HCT116 (cell line): ENCODE measurements at regions of chr1 and their contacts with region 1.

Region 1: DNA sequence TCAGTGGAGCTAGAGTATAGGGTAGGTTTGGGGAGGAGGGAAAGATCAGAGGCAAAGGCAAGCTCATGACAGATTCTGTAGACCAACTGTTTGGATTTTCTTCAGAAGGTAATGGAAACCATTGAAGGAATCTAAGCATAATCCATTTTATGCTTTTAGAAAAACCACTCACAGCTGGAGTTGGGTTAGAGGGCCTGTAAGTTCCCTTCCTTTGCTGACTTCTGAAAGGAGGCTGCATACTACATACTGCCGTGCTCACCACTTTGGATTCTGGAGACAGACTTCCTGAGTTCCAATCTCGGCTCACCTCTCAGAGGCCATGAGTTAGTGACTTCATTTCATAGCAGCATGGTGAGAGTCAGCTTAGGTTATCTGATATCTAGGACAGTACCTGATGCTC is 6.4 kb upstream of the SYT2 start:
- DNase-seq: no peak
- ATAC-seq: no peak
- H3K4me3 ChIP-seq: no peak overlapping the region
- H3K27ac ChIP-seq: no peak overlapping the region
- H3K4me1 ChIP-seq: no peaks in the 10 kb centered on the region
- H3K27me3 ChIP-seq: peaks cover 9% of the 10 kb centered on the region; the same call in 1 of the 2 replicates
- CTCF ChIP-seq: no peak
- POLR2A ChIP-seq: no peak
- RAD21 ChIP-seq: no peak

Region 2: GRCh38 chr1:202184750-202185460 is 531.7 kb before region 1 on chr1:
- CTCF ChIA-PET with region 1: interaction called, 11 read pairs
- POLR2A ChIA-PET with region 1: no interaction called
- RAD21 ChIA-PET with region 1: interaction called in 1 of 2 experiments, 3 read pairs
- intact Hi-C with region 1: loop called (anchors 2 kb)
- DNase-seq: peak; percentile 88
- ATAC-seq: peak; percentile 90
- H3K4me3 ChIP-seq: no peak overlapping the region
- H3K27ac ChIP-seq: no peak overlapping the region
- H3K4me1 ChIP-seq: peaks cover 0 to 11% of the 10 kb centered on the region in 2 experiments; a peak in 3 of 4 replicates
- H3K27me3 ChIP-seq: no peaks in the 10 kb centered on the region
- CTCF ChIP-seq: peak; percentile 88 to 96 (median 90)
- POLR2A ChIP-seq: no peak
- RAD21 ChIP-seq: peak; percentile 79

Region 3: GRCh38 chr1:202462342-202463076 is 254.1 kb before region 1 on chr1:
- CTCF ChIA-PET with region 1: interaction called, 13 read pairs
- POLR2A ChIA-PET with region 1: no interaction called
- RAD21 ChIA-PET with region 1: interaction called in 1 of 2 experiments, 4 read pairs
- intact Hi-C with region 1: loop called (anchors 1 kb)
- DNase-seq: no peak
- ATAC-seq: no peak
- H3K4me3 ChIP-seq: no peak overlapping the region
- H3K27ac ChIP-seq: no peak overlapping the region
- H3K4me1 ChIP-seq: peaks cover 0 to 28% of the 10 kb centered on the region in 2 experiments; a peak in 2 of 4 replicates
- H3K27me3 ChIP-seq: no peaks in the 10 kb centered on the region
- CTCF ChIP-seq: no peak
- POLR2A ChIP-seq: no peak
- RAD21 ChIP-seq: no peak

Region 4: DNA sequence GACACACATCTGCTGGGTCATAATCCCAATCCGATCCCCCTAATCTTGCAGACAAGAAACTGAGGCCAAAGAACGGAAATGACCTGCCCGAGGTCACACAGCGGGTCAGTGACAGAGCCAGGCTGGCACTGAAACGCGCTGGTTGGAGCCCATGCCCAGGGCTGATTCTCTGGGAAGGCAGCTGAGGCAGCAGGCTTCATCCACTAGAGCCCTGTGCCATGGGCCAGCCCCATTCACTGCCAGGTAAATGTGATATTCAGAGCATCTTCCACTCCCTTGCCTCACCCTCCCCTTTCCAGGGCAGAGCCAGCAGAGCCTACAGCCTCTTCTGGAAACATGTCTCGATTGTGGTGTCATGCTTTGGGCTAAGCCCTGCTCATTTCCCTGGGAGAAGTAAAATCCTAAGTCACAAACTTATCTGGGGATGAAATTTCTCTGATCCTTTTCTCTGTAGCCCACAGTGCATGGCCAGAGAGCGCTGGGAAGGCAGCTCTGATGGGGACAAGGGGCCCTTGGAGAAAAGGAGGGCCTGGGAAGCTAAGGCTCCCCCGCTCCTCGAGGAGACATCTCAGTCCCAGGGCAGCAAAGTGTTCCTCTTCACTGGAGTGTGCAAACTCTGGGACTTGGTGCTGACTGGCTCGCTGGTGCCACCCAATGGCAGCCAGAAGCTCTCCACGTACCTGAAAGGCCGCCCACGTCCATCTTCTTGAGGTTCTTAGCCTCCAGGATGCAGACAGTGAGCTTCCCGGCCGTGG is 116.8 kb before region 1 on chr1:
- CTCF ChIA-PET with region 1: interaction called, 5 read pairs
- POLR2A ChIA-PET with region 1: no interaction called
- RAD21 ChIA-PET with region 1: interaction called in 1 of 2 experiments, 4 read pairs
- intact Hi-C with region 1: loop called (anchors 1 kb)
- DNase-seq: peak; percentile 34
- ATAC-seq: peak; percentile 99
- H3K4me3 ChIP-seq: no peak overlapping the region
- H3K27ac ChIP-seq: no peak overlapping the region
- H3K4me1 ChIP-seq: peaks cover 0 to 8% of the 10 kb centered on the region in 2 experiments; a peak in 1 of 4 replicates
- H3K27me3 ChIP-seq: no peaks in the 10 kb centered on the region
- CTCF ChIP-seq: peak; percentile 76 to 87 (median 81)
- POLR2A ChIP-seq: no peak
- RAD21 ChIP-seq: peak; percentile 94

Region 5: GRCh38 chr1:202750758-202751157 is 34.1 kb after region 1 on chr1:
- CTCF ChIA-PET with region 1: no interaction called
- POLR2A ChIA-PET with region 1: no interaction called
- RAD21 ChIA-PET with region 1: no interaction called
- intact Hi-C with region 1: no loop called
- DNase-seq: no peak
- ATAC-seq: no peak
- H3K4me3 ChIP-seq: no peak overlapping the region
- H3K27ac ChIP-seq: no peak overlapping the region
- H3K4me1 ChIP-seq: no peaks in the 10 kb centered on the region
- H3K27me3 ChIP-seq: no peaks in the 10 kb centered on the region
- CTCF ChIP-seq: peak in 2 of 3 experiments; percentile 20 to 23; a peak in 2 of 6 replicates
- POLR2A ChIP-seq: no peak
- RAD21 ChIP-seq: peak; percentile 52

Region 6: DNA sequence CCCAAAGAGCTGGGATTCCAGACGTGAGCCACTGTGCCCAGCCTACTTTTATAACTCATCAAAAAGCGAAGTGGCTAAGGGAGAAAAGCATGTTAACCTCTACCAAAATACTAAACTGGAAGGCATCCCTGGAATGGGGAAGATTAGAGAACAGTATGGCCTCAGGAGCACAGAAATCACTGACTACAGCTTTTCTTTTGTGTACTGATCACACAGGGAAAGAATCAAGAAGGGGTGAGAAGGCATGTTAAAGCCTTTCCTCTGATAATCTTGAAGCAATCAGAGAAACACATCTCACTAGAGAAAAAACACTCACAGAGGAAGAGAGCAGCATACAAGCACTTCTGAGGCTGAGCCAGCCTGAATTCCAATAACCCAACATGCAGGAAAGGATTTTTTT is 104.8 kb after region 1 on chr1:
- CTCF ChIA-PET with region 1: no interaction called
- POLR2A ChIA-PET with region 1: no interaction called
- RAD21 ChIA-PET with region 1: no interaction called
- intact Hi-C with region 1: no loop called
- DNase-seq: no peak
- ATAC-seq: no peak
- H3K4me3 ChIP-seq: no peak overlapping the region
- H3K27ac ChIP-seq: no peak overlapping the region
- H3K4me1 ChIP-seq: peaks cover 0 to 7% of the 10 kb centered on the region in 2 experiments; a peak in 1 of 4 replicates
- H3K27me3 ChIP-seq: no peaks in the 10 kb centered on the region; the same call in 1 of the 2 replicates
- CTCF ChIP-seq: no peak
- POLR2A ChIP-seq: no peak
- RAD21 ChIP-seq: no peak

Region 7: DNA sequence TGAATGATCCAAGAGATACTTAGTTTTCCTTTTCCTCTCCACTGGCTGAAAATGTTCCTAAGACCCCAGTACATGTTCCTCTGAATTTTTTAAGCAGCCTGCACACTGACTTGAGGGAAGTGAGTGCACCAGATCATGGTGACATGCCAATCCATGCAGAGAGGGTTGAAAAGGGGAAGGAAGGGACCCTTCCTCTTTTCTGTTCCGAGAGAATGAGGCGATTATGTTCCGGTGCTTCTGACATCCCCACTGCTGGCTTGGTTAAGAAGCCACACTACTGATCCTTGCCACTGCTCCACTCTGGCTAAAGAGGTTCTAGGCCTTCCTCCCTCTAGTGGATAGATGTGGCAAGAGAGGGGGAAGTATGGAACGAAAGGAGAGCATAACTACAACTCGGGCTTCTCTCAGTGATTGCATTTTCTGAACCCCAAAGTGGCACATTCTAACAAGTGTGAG is 252.2 kb after region 1 on chr1:
- CTCF ChIA-PET with region 1: no interaction called
- POLR2A ChIA-PET with region 1: no interaction called
- RAD21 ChIA-PET with region 1: no interaction called
- intact Hi-C with region 1: no loop called
- DNase-seq: peak; percentile 68
- ATAC-seq: peak; percentile 82
- H3K4me3 ChIP-seq: no peak overlapping the region
- H3K27ac ChIP-seq: no peak overlapping the region
- H3K4me1 ChIP-seq: peaks cover 10 to 23% of the 10 kb centered on the region in 2 experiments
- H3K27me3 ChIP-seq: no peaks in the 10 kb centered on the region
- CTCF ChIP-seq: peak; percentile 49 to 93 (median 74); a peak in 5 of 6 replicates
- POLR2A ChIP-seq: no peak
- RAD21 ChIP-seq: peak; percentile 54